ENCODE measurements at regions of chr18 and their contacts with region 1.

Region 1: GRCh38 chr18:59837586-59837985 is 62.2 kb upstream of the PMAIP1 start:
- DNase-seq: peak; percentile 59
- ATAC-seq: peak; percentile 66
- H3K4me3 Mint-ChIP-seq: no peak overlapping the region
- H3K27ac Mint-ChIP-seq: no peak overlapping the region
- H3K4me1 Mint-ChIP-seq: peaks cover 7% of the 10 kb centered on the region
- H3K27me3 Mint-ChIP-seq: no peaks in the 10 kb centered on the region
- CTCF ChIP-seq: peak; percentile 81

Region 2: DNA sequence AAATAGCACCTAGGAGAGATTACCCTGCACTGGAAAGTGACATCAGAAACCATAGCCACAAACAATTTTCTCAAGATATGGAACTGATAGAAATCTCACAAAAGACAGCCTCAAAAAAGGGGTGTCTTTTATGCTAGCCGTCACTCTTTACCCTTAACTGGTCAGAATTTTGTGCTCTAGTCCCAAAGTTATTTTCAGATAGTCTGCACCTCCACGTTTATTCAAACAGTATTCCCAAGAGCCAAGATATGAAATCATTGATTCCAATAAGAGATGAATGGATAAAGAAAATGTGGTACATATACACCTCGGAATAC is 38.7 kb after region 1 on chr18:
- CTCF ChIA-PET with region 1: interaction called, 3 read pairs
- POLR2A ChIA-PET with region 1: no interaction called
- intact Hi-C with region 1: loop called (anchors 5 kb)
- DNase-seq: no peak
- ATAC-seq: peak; percentile 54
- H3K4me3 Mint-ChIP-seq: no peak overlapping the region
- H3K27ac Mint-ChIP-seq: no peak overlapping the region
- H3K4me1 Mint-ChIP-seq: peaks cover 13% of the 10 kb centered on the region
- H3K27me3 Mint-ChIP-seq: peaks cover 2% of the 10 kb centered on the region
- CTCF ChIP-seq: no peak

Region 3: DNA sequence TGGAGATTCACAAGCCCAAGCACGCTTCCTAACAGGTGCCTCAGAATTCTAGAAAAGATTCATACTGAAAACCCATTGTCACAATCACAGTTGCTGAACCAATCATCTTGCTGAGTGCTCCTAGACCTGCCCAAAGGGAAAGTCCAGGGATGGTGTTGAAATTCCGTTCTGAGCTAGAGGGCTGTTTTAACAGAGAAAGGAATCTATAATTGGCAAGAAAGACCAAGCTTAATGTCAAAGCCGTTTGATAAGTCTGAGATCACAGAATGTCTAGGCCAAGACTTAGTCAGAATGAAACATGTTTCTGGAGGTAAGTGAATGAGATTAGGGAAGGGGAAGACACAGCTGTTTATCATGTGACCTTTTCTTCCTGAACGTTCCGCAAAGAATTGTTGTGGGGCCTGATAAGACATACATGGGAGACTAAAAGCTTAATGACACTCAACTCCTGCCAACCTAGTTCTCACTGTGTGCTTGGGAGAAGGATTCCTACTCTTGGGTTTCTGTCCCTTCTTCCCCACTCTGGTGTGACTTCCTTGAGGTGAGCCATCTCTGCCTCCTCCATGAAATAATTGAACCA is 89.8 kb after region 1 on chr18:
- CTCF ChIA-PET with region 1: interaction called, 5 read pairs
- POLR2A ChIA-PET with region 1: no interaction called
- intact Hi-C with region 1: loop called (anchors 5 kb)
- DNase-seq: peak; percentile 60
- ATAC-seq: peak; percentile 86
- H3K4me3 Mint-ChIP-seq: no peak overlapping the region
- H3K27ac Mint-ChIP-seq: peak overlapping the region; percentile 63
- H3K4me1 Mint-ChIP-seq: peaks cover 24% of the 10 kb centered on the region
- H3K27me3 Mint-ChIP-seq: peaks cover 5% of the 10 kb centered on the region
- CTCF ChIP-seq: no peak

Measured in activated CD8-positive, alpha-beta T cell treated with anti-CD3 and anti-CD28 coated beads for 36 hours (primary cell).